A673 (cell line): ENCODE measurements at regions of chr3 and their contacts with region 1.

Region 1: DNA sequence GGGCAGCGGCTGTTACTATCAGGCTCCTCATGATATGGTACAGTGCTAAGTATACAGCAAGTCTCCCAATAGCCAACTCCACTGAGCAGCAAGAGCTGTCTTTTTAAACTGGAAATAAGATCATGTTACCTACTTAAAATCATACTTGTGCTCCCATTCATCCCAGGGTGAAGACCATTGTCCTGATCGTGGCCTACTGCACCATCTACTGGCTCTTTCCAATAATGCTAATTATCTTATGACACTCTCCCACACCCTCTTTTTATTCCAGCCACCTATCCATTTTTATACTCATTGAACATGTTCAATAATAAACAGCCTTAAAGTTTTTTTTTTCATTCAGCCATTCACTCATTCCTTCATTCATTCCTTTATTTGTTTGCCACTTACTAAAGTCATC is 117.7 kb downstream of the GBE1 start:
- DNase-seq: peak; percentile 58
- H3K4me3 ChIP-seq: no peak overlapping the region
- H3K27ac ChIP-seq: no peak overlapping the region
- H3K4me1 ChIP-seq: no peaks in the 10 kb centered on the region
- H3K27me3 ChIP-seq: no peaks in the 10 kb centered on the region
- CTCF ChIP-seq: peak; percentile 52

Region 2: DNA sequence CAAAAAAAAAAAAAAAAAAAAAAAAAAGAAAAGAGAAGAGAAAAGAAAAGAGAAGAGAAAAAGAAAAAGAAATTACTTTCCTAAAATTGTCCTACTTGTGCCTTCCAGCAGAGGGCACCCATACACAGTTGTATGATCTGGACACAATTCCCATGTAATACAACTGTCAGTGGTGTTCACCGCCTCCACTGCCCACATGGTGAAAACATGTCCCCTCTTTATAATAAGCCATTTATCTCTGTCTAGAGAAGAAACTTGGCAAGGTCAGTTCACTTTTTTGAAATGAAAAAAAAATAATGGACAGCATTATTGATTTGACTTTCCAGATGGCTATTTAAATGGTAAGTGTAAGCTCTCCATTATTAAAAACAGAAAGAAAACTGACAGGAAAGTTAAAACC is 341.7 kb before region 1 on chr3:
- CTCF ChIA-PET with region 1: no interaction called
- POLR2A ChIA-PET with region 1: no interaction called
- intact Hi-C with region 1: loop called (anchors 2 kb)
- DNase-seq: peak; percentile 71
- H3K4me3 ChIP-seq: no peak overlapping the region
- H3K27ac ChIP-seq: no peak overlapping the region
- H3K4me1 ChIP-seq: no peaks in the 10 kb centered on the region
- H3K27me3 ChIP-seq: no peaks in the 10 kb centered on the region
- CTCF ChIP-seq: peak; percentile 73

Region 3: GRCh38 chr3:81419228-81419627 is 224.5 kb before region 1 on chr3:
- CTCF ChIA-PET with region 1: no interaction called
- POLR2A ChIA-PET with region 1: no interaction called
- intact Hi-C with region 1: loop called (anchors 5 kb)
- DNase-seq: peak; percentile 5
- H3K4me3 ChIP-seq: no peak overlapping the region
- H3K27ac ChIP-seq: no peak overlapping the region
- H3K4me1 ChIP-seq: no peaks in the 10 kb centered on the region
- H3K27me3 ChIP-seq: no peaks in the 10 kb centered on the region
- CTCF ChIP-seq: peak; percentile 52; the same call in 1 of the 2 replicates

Region 4: DNA sequence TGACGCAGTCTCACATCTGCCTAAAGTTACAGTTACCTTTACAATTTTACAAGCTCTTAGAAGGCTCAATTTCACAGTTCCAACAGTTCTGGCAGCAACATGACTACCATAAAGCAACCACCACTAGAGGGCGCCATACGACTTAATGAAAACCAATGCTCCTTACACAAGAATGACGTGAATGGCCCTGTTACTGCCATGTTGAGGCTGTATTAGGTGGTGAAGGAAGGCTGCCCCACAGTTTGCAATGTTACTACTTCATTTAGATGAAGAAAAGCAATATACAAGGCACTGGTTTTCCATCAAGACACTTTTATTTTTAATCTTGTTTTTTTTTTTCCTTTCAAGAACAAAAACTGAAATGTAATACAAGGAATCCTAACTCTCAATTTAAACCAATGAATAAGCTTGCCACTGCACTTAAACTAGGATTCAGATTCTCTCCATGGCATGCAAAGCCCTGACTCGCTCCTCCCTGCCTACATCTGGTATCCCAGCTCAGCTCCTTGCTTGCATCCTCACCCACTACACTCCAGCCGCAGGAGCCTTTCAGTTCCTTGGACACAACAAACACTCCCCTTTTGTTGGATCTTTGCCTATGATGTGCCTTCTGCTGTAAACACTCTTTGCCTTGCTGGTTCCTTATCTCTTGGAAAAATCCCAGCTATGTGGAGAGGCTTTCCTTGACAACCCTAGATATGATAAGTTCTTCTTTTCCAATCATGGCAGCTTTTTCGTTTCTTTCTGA is 153.0 kb before region 1 on chr3:
- CTCF ChIA-PET with region 1: no interaction called
- POLR2A ChIA-PET with region 1: no interaction called
- intact Hi-C with region 1: loop called (anchors 2 kb)
- DNase-seq: peak; percentile 88
- H3K4me3 ChIP-seq: no peak overlapping the region
- H3K27ac ChIP-seq: no peak overlapping the region
- H3K4me1 ChIP-seq: no peaks in the 10 kb centered on the region
- H3K27me3 ChIP-seq: no peaks in the 10 kb centered on the region
- CTCF ChIP-seq: peak; percentile 88

Region 5: GRCh38 chr3:81581966-81582599 is 61.6 kb before region 1 on chr3:
- CTCF ChIA-PET with region 1: no interaction called
- POLR2A ChIA-PET with region 1: no interaction called
- intact Hi-C with region 1: loop called (anchors 2 kb)
- DNase-seq: peak; percentile 61
- H3K4me3 ChIP-seq: no peak overlapping the region
- H3K27ac ChIP-seq: no peak overlapping the region
- H3K4me1 ChIP-seq: no peaks in the 10 kb centered on the region
- H3K27me3 ChIP-seq: no peaks in the 10 kb centered on the region
- CTCF ChIP-seq: peak; percentile 80

Region 6: DNA sequence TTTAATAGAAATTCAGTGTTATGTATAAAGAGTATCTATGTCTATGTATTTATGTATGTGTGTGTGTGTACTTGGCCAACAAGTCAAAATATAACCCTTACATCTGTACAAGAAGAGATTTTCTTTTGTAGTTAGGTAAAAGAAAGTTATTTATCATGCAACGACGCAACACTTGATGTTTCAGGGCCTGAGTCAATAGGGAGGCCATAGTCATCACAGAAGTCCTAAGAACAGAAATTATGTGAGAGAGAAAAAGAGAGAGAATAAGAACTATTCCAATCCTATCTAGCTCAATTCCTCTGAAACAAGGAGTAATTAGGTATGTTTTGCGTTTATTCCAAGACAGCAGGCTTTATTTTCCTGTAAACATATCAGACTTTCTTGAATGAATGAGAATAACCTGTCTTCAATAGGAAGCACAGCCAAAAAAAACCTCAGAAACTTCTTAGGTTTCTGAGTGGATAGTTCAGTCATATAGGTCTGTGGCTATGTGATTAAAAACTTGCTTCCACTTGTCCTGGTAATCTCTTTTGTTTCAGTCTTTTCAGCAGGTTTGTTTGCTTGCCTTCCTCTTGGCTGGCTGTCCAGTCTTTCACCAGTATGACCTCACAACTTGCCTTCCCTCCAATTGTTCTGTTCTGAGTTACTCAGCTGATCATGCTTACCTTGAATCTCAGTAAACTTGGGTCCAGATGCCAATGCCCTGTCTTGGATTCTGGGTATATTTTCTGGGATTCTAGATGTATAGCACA is 500.1 kb after region 1 on chr3:
- CTCF ChIA-PET with region 1: no interaction called
- POLR2A ChIA-PET with region 1: no interaction called
- intact Hi-C with region 1: no loop called
- DNase-seq: no peak
- H3K4me3 ChIP-seq: no peak overlapping the region
- H3K27ac ChIP-seq: no peak overlapping the region
- H3K4me1 ChIP-seq: no peaks in the 10 kb centered on the region
- H3K27me3 ChIP-seq: no peaks in the 10 kb centered on the region
- CTCF ChIP-seq: no peak